ENCODE measurements at regions of chr13 and their contacts with region 1.

Region 1: GRCh38 chr13:33678906-33679657 is 138.9 kb upstream of the RFC3 start:
- DNase-seq: peak; percentile 69
- ATAC-seq: peak; percentile 46 to 80

Region 2: GRCh38 chr13:32761472-32761871 is 917.6 kb before region 1 on chr13:
- intact Hi-C with region 1: no loop called
- DNase-seq: no peak
- ATAC-seq: no peak

Region 3: GRCh38 chr13:33610471-33611015 is 68.5 kb before region 1 on chr13:
- intact Hi-C with region 1: loop called in 1 of 2 experiments (anchors 5 kb)
- DNase-seq: peak; percentile 82
- ATAC-seq: peak; percentile 87 to 91

Measured in left cardiac atrium (tissue), 4 donors.